Mammary epithelial cell (primary cell): ENCODE measurements at regions of chr3 and their contacts with region 1.

Region 1: DNA sequence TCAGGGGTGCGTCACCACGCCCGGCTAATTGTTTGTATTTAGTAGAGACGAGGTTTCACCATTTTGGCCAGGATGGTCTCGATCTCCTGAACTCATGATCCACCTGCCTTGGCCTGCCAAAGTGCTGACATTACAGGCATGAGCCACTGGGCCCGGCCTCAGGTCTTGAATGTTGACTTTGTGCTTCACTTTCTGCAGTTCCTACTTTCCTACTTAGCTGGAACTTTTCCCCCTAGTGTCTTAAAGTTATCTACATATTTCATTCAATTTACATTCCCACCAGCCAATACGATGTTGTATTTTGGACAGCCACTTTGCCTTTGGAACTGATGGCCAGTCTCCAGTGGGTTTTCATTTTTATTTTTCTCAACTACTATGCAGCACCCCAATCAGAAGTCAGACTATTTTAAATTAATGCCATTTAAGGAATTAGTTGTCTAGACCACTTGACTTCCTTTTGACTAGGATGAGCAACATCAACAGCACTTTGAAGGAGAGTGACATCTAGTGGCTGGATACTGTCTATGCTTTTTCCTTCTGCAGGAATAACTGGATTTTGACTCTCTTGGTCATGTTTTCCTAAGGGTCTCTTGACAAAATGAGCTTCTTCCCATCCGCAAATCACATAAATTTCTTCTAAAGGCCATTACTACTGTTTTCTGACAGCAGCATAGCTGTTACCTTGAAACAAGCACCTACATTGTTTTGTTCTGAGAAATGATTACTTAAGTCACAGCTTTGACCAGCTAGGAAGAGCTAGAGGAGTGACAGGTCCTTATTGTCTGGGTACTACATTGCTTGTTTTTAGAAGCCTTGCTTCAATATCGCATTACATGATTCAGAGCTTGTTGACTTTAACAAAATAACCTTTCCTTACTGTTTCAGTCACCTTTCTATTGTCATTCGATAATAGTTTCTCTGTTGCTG is 140.2 kb downstream of the ITPR1 start:
- DNase-seq: peak; percentile 35
- H3K4me3 ChIP-seq: no peak overlapping the region
- H3K27ac ChIP-seq: no peak overlapping the region
- H3K4me1 ChIP-seq: no peaks in the 10 kb centered on the region
- H3K27me3 ChIP-seq: no peaks in the 10 kb centered on the region
- CTCF ChIP-seq: peak; percentile 90 to 92

Region 2: GRCh38 chr3:4314688-4315087 is 318.7 kb before region 1 on chr3:
- CTCF ChIA-PET with region 1: no interaction called
- dilution Hi-C with region 1: no loop called
- in situ Hi-C with region 1: no loop called
- intact Hi-C with region 1: loop called (anchors 1 kb)
- DNase-seq: no peak
- H3K4me3 ChIP-seq: no peak overlapping the region
- H3K27ac ChIP-seq: no peak overlapping the region
- H3K4me1 ChIP-seq: no peaks in the 10 kb centered on the region
- H3K27me3 ChIP-seq: no peaks in the 10 kb centered on the region
- CTCF ChIP-seq: peak; percentile 50 to 57

Region 3: DNA sequence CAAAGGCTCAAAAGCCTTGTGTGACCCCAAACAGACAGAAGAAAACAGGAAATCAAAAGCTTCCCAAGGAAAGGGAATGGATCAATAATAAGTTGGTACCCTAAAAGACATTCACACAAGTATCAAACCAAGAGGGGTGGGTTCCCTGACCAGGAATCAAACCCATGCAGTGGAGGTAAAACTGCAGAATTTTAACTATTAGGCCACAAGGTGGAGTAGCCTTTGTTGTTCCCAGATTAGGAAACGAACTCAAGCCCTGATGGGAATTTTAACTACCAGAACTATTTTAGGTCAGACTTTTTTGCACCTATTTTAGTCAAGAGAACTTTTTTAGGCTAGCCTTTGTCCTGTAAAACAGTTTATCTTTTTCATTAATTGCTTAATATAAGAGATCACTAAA is 298.8 kb before region 1 on chr3:
- CTCF ChIA-PET with region 1: interaction called, 3 read pairs
- dilution Hi-C with region 1: no loop called
- in situ Hi-C with region 1: no loop called
- intact Hi-C with region 1: loop called (anchors 1 kb)
- DNase-seq: no peak
- H3K4me3 ChIP-seq: no peak overlapping the region
- H3K27ac ChIP-seq: no peak overlapping the region
- H3K4me1 ChIP-seq: no peaks in the 10 kb centered on the region
- H3K27me3 ChIP-seq: no peaks in the 10 kb centered on the region
- CTCF ChIP-seq: peak in 1 of 2 donors; percentile 21

Region 4: DNA sequence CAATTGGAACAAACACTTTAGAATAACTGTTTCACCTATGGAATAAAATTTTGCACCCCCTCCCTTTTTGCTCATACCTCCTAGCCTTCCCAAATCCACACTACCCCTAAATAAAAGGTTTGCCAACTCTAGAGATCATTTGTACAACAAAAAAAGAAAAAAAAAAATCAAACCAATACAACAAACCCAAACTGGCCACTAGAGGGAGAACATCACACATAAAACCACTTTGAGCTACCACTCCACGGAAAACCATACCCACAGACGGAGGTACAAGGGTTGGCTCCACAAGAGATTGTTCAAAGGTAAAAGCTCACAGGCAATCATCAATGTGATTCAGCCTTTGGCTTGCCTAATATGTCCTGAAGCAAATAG is 282.6 kb before region 1 on chr3:
- CTCF ChIA-PET with region 1: interaction called, 6 read pairs
- dilution Hi-C with region 1: no loop called
- in situ Hi-C with region 1: loop called (anchors 5 kb)
- intact Hi-C with region 1: loop called (anchors 1 kb)
- DNase-seq: peak; percentile 41
- H3K4me3 ChIP-seq: no peak overlapping the region
- H3K27ac ChIP-seq: no peak overlapping the region
- H3K4me1 ChIP-seq: no peaks in the 10 kb centered on the region
- H3K27me3 ChIP-seq: no peaks in the 10 kb centered on the region
- CTCF ChIP-seq: peak; percentile 71 to 75

Region 5: GRCh38 chr3:4571690-4572334 is 61.5 kb before region 1 on chr3:
- CTCF ChIA-PET with region 1: no interaction called
- dilution Hi-C with region 1: no loop called
- in situ Hi-C with region 1: no loop called
- intact Hi-C with region 1: no loop called
- DNase-seq: peak; percentile 27
- H3K4me3 ChIP-seq: no peak overlapping the region
- H3K27ac ChIP-seq: no peak overlapping the region
- H3K4me1 ChIP-seq: peaks cover 6% of the 10 kb centered on the region
- H3K27me3 ChIP-seq: no peaks in the 10 kb centered on the region
- CTCF ChIP-seq: no peak